ENCODE measurements at regions of chr3 and their contacts with region 1.

Region 1: DNA sequence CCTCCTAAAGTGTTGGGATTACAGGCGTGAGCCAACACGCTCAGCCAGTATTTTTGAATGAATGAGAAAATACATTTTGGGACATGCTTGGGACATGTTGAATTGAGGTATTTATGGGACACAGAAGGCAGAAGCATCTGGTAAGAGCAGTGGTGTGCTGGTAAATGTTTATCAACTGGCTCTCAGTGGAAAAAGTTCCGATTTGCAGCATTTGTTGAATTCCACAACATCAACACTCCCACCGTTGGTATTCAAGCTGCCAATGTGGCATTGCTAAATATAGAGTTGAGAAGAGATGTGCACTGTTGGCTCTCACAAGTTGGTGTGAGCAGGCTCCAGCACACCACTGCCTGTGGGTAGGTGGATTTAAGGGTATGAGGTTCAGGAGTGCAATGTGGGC is 35.8 kb upstream of the LRRFIP2 start:
- DNase-seq: no peak
- CTCF ChIP-seq: no peak

Region 2: GRCh38 chr3:37223141-37223558 is 12.9 kb after region 1 on chr3:
- CTCF ChIA-PET with region 1: interaction called, 14 read pairs
- POLR2A ChIA-PET with region 1: no interaction called
- DNase-seq: no peak
- CTCF ChIP-seq: no peak

Region 3: GRCh38 chr3:37338500-37338899 is 128.3 kb after region 1 on chr3:
- CTCF ChIA-PET with region 1: no interaction called
- POLR2A ChIA-PET with region 1: no interaction called
- DNase-seq: no peak
- CTCF ChIP-seq: no peak